Naive thymus-derived CD8-positive, alpha-beta T cell (primary cell): ENCODE measurements at regions of chr3 and their contacts with region 1.

Region 1: GRCh38 chr3:129016356-129016719 is 15.2 kb downstream of the EFCC1 start:
- DNase-seq: peak; percentile 55 to 88 (median 68)
- ATAC-seq: peak; percentile 91 to 92
- H3K4me3 Mint-ChIP-seq: peak overlapping the region; percentile 43 to 94 (median 80)
- H3K27ac Mint-ChIP-seq: peak overlapping the region; percentile 77 to 100 (median 96)
- H3K4me1 Mint-ChIP-seq: peaks cover 26 to 55% (median 49%) of the 10 kb centered on the region in 4 donors
- H3K27me3 Mint-ChIP-seq: no peaks in the 10 kb centered on the region

Region 2: GRCh38 chr3:128969993-128970739 is 46.2 kb before region 1 on chr3:
- POLR2A ChIA-PET with region 1: interaction called, 25 read pairs
- DNase-seq: peak; percentile 47 to 79 (median 66)
- ATAC-seq: peak; percentile 74 to 80
- H3K4me3 Mint-ChIP-seq: no peak overlapping the region
- H3K27ac Mint-ChIP-seq: peak overlapping the region in 3 of 10 donors; percentile 7 to 61 (median 32)
- H3K4me1 Mint-ChIP-seq: peaks cover 0 to 20% (median 6%) of the 10 kb centered on the region in 4 donors
- H3K27me3 Mint-ChIP-seq: no peaks in the 10 kb centered on the region

Region 3: GRCh38 chr3:128993461-128994173 is 22.7 kb before region 1 on chr3 and contains the start of gene CFAP92:
- POLR2A ChIA-PET with region 1: interaction called, 257 read pairs
- DNase-seq: peak; percentile 84 to 95 (median 90)
- ATAC-seq: peak; percentile 94 to 95
- H3K4me3 Mint-ChIP-seq: peak within 1 kb of the TSS; percentile 68 to 90 (median 84)
- H3K27ac Mint-ChIP-seq: peak within 1 kb of the TSS; percentile 60 to 94 (median 88)
- H3K4me1 Mint-ChIP-seq: peaks cover 23 to 39% (median 36%) of the 10 kb centered on the region in 4 donors
- H3K27me3 Mint-ChIP-seq: peaks cover 0 to 4% (median 0%) of the 10 kb centered on the region in 5 donors
- polyA plus RNA-seq, gene CFAP92: 0.18 to 0.23 (median 0.20) TPM

Region 4: GRCh38 chr3:129026728-129027543 is 10.6 kb after region 1 on chr3:
- POLR2A ChIA-PET with region 1: interaction called, 125 read pairs
- DNase-seq: peak; percentile 87 to 96 (median 92)
- ATAC-seq: peak; percentile 97
- H3K4me3 Mint-ChIP-seq: peak overlapping the region; percentile 84 to 94 (median 90)
- H3K27ac Mint-ChIP-seq: peak overlapping the region; percentile 92 to 99 (median 98)
- H3K4me1 Mint-ChIP-seq: peaks cover 16 to 32% (median 30%) of the 10 kb centered on the region in 4 donors
- H3K27me3 Mint-ChIP-seq: no peaks in the 10 kb centered on the region

Region 5: GRCh38 chr3:129052675-129053074 is 36.3 kb after region 1 on chr3:
- POLR2A ChIA-PET with region 1: interaction called, 14 read pairs
- DNase-seq: no peak
- ATAC-seq: no peak
- H3K4me3 Mint-ChIP-seq: no peak overlapping the region
- H3K27ac Mint-ChIP-seq: peak overlapping the region in 1 of 10 donors; percentile 84
- H3K4me1 Mint-ChIP-seq: peaks cover 7 to 11% (median 9%) of the 10 kb centered on the region in 4 donors
- H3K27me3 Mint-ChIP-seq: peaks cover 0 to 4% (median 0%) of the 10 kb centered on the region in 5 donors

Region 6: GRCh38 chr3:129183569-129184395 is 167.4 kb after region 1 on chr3 and contains the start of gene CNBP:
- POLR2A ChIA-PET with region 1: interaction called, 13 read pairs
- DNase-seq: peak; percentile 87 to 96 (median 93)
- ATAC-seq: peak; percentile 95 to 97
- H3K4me3 Mint-ChIP-seq: peak within 1 kb of the TSS; percentile 91 to 99 (median 96)
- H3K27ac Mint-ChIP-seq: peak within 1 kb of the TSS; percentile 92 to 100 (median 98)
- H3K4me1 Mint-ChIP-seq: peaks cover 14 to 50% (median 37%) of the 10 kb centered on the region in 4 donors
- H3K27me3 Mint-ChIP-seq: no peaks in the 10 kb centered on the region
- polyA plus RNA-seq, gene CNBP: 843 to 960 (median 927) TPM

Region 7: GRCh38 chr3:129249276-129250065 is 233.1 kb after region 1 on chr3 and contains the start of gene COPG1:
- POLR2A ChIA-PET with region 1: interaction called, 14 read pairs
- DNase-seq: peak; percentile 78 to 92 (median 86)
- ATAC-seq: peak; percentile 82 to 88
- H3K4me3 Mint-ChIP-seq: peak within 1 kb of the TSS; percentile 93 to 99 (median 96)
- H3K27ac Mint-ChIP-seq: peak within 1 kb of the TSS; percentile 91 to 98 (median 97)
- H3K4me1 Mint-ChIP-seq: peaks cover 18 to 61% (median 42%) of the 10 kb centered on the region in 4 donors
- H3K27me3 Mint-ChIP-seq: no peaks in the 10 kb centered on the region
- polyA plus RNA-seq, gene COPG1: 54.0 to 75.5 (median 58.5) TPM